ENCODE measurements at regions of chr14 and their contacts with region 1.

Region 1: DNA sequence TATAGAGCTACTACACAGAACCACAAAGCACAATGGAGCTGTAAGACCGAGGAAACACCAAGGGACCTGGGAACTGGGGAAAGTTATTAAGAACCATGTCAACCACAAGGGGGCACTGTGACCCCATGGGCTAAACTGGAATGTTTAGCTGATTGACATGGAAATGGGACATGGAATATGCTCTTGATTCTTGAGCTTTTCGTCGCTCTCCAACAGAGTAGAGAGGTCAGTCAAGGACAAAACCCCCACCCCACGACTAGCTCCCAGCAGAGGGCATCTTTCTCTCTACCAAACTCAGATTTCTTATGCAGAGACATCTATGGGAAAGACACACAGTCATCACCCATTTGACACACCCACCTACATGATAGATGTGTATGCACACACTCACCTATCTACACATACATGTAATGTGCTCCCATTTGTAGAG is 10.1 kb downstream of the NDRG2 start:
- DNase-seq: peak; percentile 59 to 88 (median 60)
- ATAC-seq: peak; percentile 95
- H3K4me3 ChIP-seq: no peak overlapping the region
- H3K27ac ChIP-seq: no peak overlapping the region
- H3K4me1 ChIP-seq: peaks cover 0 to 7% of the 10 kb centered on the region in 2 experiments; a peak in 1 of 5 replicates
- H3K27me3 ChIP-seq: no peaks in the 10 kb centered on the region
- CTCF ChIP-seq: peak; percentile 76 to 95 (median 93)
- EP300 ChIP-seq: no peak
- POLR2A ChIP-seq: no peak
- RAD21 ChIP-seq: peak; percentile 92 to 96

Region 2: DNA sequence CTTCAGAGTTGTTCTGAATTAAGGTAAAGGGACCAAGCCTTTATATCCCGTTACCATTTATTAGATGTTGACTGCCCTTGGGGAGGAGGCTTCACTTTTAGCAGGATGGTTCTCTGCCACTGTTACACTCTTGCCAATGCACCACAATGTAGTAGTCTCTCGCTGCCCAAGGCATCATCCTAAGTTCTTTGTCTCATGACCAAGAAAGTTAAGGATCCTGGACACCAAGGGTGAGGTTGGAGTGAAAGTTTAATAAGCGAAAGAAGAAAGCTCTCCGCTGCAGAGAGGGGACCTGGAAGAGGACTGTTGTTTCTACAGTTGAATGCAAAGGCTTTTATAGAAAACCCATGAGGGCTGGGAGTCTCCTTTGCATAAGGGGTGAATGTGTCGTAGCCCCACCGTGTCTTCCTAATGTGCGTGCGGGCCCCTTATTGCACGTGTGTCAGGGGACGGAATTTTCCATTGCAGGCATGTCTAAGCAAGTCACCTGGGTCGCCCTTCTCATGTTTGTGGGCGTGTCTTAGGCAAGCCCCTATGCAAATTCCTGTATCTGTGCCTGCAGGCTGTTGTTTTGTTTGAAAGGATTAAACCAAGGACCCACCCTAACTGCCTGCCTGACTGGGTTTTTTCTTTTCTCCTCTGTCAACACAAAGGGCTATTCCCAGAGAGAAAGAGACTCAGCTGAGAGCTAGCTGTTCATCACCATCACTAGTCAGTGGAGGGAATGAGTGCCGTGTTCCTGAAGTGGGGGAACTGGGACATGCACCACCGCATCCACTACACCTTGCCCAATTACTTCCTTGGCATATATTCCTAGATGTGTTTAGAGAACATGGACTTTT is 194.5 kb before region 1 on chr14:
- CTCF ChIA-PET with region 1: no interaction called
- POLR2A ChIA-PET with region 1: no interaction called
- in situ Hi-C with region 1: no loop called
- intact Hi-C with region 1: no loop called
- DNase-seq: peak; percentile 41 to 84 (median 58)
- ATAC-seq: peak; percentile 94
- H3K4me3 ChIP-seq: no peak overlapping the region
- H3K27ac ChIP-seq: peak overlapping the region; percentile 69
- H3K4me1 ChIP-seq: peaks cover 5 to 26% of the 10 kb centered on the region in 2 experiments; a peak in 4 of 5 replicates
- H3K27me3 ChIP-seq: no peaks in the 10 kb centered on the region
- CTCF ChIP-seq: no peak
- EP300 ChIP-seq: peak; percentile 89
- POLR2A ChIP-seq: peak; percentile 59
- RAD21 ChIP-seq: no peak

Region 3: DNA sequence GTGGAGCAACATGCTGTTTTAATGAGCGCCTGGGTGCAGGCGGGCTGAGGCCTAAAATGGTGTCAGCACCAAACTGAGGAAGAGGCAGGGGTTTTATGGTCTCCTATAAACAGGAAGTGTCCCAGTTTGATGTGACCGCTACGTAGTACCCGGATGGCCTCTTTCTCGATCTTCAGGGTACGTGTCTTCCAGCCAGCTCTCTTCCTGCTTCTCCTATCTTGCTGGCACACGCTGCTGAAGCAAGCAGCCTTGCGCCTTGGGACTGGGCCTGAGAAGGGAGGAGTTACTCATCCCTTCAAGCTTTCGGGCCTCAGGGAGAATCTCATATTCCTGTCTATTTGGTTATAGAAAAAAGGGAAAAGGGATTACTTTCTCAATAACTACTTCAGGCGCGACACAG is 183.9 kb before region 1 on chr14:
- CTCF ChIA-PET with region 1: no interaction called
- POLR2A ChIA-PET with region 1: no interaction called
- in situ Hi-C with region 1: no loop called
- intact Hi-C with region 1: no loop called
- DNase-seq: no peak
- ATAC-seq: no peak
- H3K4me3 ChIP-seq: no peak overlapping the region
- H3K27ac ChIP-seq: no peak overlapping the region
- H3K4me1 ChIP-seq: no peaks in the 10 kb centered on the region; a peak in 2 of 5 replicates
- H3K27me3 ChIP-seq: no peaks in the 10 kb centered on the region
- CTCF ChIP-seq: no peak
- EP300 ChIP-seq: no peak
- POLR2A ChIP-seq: no peak
- RAD21 ChIP-seq: no peak

Region 4: DNA sequence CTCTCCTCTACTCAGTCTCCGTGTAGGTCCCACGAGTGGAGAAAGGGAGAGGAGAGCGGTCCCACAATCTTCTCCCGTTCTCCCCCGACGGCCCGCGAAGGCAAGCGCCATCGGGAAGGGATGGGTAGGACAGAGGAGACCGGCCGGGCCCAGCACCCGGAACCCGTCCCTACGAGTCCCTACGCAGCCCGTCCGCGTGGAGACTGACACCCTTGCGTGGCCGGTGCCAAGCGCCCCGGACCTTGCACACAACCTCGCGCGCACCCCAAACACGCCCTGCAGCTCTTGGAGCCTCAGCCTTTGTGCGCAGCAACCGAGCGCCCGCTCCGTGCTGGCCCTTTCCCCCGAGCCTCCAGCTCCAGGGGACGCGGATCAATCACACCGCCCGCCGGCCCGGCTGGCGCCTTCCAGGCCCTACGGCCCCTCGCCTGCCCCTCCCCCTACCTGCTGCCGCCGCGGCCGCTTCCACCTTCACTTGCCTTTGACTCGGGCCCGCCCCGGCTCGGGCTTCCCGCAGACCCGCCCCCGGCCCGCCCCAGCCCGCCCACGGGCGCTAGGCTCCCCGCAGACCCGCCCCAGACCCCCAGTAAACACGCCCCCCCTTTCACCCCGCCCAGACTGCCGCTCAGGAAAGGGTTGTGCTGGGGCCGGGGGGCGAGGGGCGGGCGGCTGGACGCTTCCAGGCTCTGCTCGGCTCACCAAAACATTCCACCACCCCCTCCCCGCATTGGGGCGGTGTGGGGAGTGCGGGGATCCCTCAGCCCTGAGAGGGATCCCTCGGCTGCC is 10.0 kb after region 1 on chr14 and contains the start of gene NDRG2:
- CTCF ChIA-PET with region 1: no interaction called
- POLR2A ChIA-PET with region 1: interaction called, 12 read pairs
- in situ Hi-C with region 1: no loop called
- intact Hi-C with region 1: no loop called
- DNase-seq: peak; percentile 85 to 92 (median 91)
- ATAC-seq: peak; percentile 90
- H3K4me3 ChIP-seq: peak within 1 kb of the TSS; percentile 66
- H3K27ac ChIP-seq: peak within 1 kb of the TSS; percentile 80
- H3K4me1 ChIP-seq: peaks cover 35 to 39% of the 10 kb centered on the region in 2 experiments
- H3K27me3 ChIP-seq: no peaks in the 10 kb centered on the region
- CTCF ChIP-seq: no peak
- EP300 ChIP-seq: no peak
- POLR2A ChIP-seq: peak; percentile 65
- RAD21 ChIP-seq: no peak
- polyA plus RNA-seq, gene NDRG2: 10.1 to 22.9 TPM

Region 5: DNA sequence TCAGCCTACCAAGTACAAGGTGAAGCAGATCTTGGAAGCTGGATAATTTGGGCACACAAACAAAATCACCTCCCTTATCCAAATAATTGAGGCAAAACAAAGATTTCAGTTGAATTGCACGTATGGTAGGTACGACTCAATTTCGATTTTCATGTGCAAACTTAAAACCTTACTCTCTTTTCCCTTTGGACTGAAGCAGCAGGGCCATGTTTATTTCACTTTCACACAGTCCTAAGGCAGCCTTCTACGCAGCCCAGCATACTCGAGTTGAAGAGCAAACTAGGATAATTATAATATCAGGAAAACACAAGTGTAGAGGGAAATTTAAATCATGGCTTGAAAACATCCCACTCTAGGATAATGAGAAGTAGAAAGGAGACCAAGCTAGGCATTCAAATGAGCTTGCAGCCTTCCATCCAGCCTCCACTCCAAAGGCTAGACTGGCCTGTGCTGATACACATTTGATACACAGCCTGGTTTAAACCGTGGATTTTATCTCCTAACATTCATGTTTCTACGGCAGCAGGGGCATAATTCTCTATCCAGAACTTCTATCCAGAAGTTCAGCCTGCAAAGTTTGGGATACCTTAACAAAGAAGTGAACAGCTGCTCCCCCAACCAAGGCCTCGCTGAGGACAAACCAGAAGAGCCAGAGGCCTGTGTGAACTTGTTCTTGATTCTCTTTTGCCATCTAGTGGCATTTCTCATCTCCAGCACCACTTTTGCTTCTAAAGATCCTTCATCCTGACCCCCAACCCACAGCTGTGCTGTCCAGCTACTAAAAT is 25.0 kb after region 1 on chr14:
- CTCF ChIA-PET with region 1: interaction called, 33 read pairs
- POLR2A ChIA-PET with region 1: interaction called, 15 read pairs
- in situ Hi-C with region 1: no loop called
- intact Hi-C with region 1: loop called (anchors 1 kb)
- DNase-seq: peak in 2 of 4 experiments; percentile 64 to 73
- ATAC-seq: peak; percentile 92
- H3K4me3 ChIP-seq: no peak overlapping the region
- H3K27ac ChIP-seq: no peak overlapping the region
- H3K4me1 ChIP-seq: peaks cover 5 to 25% of the 10 kb centered on the region in 2 experiments; a peak in 4 of 5 replicates
- H3K27me3 ChIP-seq: no peaks in the 10 kb centered on the region
- CTCF ChIP-seq: peak; percentile 62 to 84 (median 75)
- EP300 ChIP-seq: no peak
- POLR2A ChIP-seq: no peak
- RAD21 ChIP-seq: peak; percentile 81 to 89

Region 6: DNA sequence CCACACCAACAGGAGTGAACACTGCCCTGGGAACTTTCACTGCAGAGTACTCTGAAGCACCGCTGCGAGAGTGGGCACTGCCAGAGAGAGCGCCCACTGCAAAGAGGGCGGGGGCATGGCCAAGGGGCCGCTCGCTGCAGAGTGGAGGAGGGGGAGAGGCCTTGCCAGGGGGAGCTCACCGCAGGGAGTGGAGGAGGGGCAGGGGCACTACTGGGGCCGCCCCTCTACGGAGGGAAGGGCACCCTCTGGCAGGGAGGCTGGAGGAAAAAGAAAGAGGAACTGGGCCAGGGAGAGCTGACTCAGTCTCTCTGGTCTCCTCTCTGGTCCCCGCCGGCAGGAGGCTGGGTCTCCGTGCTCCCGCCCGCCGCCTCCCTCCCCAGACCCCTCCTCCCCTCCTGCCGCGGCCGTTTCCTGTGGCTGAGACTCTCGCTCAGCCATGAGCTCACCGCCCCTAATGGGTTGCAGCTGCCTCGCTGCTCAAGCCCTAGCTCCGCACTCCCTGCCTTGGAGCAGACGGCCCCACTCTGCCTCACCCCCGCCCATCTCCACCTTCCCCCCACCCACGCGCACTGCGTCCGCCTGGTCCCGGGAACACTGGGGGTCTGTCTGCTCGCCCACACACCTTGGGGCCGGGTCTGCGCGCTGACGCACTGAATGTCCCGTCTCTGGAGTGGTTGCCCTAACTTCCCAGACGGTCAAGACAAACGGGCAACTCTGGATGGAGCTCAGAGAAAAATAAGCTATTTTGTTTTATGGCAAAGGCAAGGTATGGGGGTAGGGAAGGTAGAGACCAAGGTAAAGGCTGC is 56.7 kb after region 1 on chr14:
- CTCF ChIA-PET with region 1: interaction called, 3 read pairs
- POLR2A ChIA-PET with region 1: no interaction called
- in situ Hi-C with region 1: no loop called
- intact Hi-C with region 1: loop called (anchors 1 kb)
- DNase-seq: peak; percentile 58 to 76 (median 62)
- ATAC-seq: peak; percentile 72
- H3K4me3 ChIP-seq: 0 out of 2 replicates have a peak overlapping the region, but pooled peaks have one; percentile 13
- H3K27ac ChIP-seq: no peak overlapping the region; the same call in 2 of the 3 replicates
- H3K4me1 ChIP-seq: peaks cover 2 to 41% of the 10 kb centered on the region in 2 experiments; a peak in 3 of 5 replicates
- H3K27me3 ChIP-seq: no peaks in the 10 kb centered on the region
- CTCF ChIP-seq: no peak
- EP300 ChIP-seq: no peak
- POLR2A ChIP-seq: no peak
- RAD21 ChIP-seq: no peak

Region 7: GRCh38 chr14:21092273-21093011 is 77.7 kb after region 1 on chr14:
- CTCF ChIA-PET with region 1: interaction called, 21 read pairs
- POLR2A ChIA-PET with region 1: interaction called, 3 read pairs
- in situ Hi-C with region 1: no loop called
- intact Hi-C with region 1: loop called (anchors 2 kb)
- DNase-seq: peak; percentile 72 to 78 (median 74)
- ATAC-seq: peak; percentile 88
- H3K4me3 ChIP-seq: no peak overlapping the region
- H3K27ac ChIP-seq: no peak overlapping the region
- H3K4me1 ChIP-seq: peaks cover 4 to 29% of the 10 kb centered on the region in 2 experiments; a peak in 4 of 5 replicates
- H3K27me3 ChIP-seq: no peaks in the 10 kb centered on the region
- CTCF ChIP-seq: peak; percentile 98 to 100 (median 100)
- EP300 ChIP-seq: no peak
- POLR2A ChIP-seq: no peak
- RAD21 ChIP-seq: peak; percentile 92 to 98

Region 8: GRCh38 chr14:21191809-21192446 is 177.2 kb after region 1 on chr14:
- CTCF ChIA-PET with region 1: no interaction called
- POLR2A ChIA-PET with region 1: no interaction called
- in situ Hi-C with region 1: no loop called
- intact Hi-C with region 1: no loop called
- DNase-seq: peak; percentile 35 to 79 (median 48)
- ATAC-seq: peak; percentile 99
- H3K4me3 ChIP-seq: peak overlapping the region; percentile 21
- H3K27ac ChIP-seq: no peak overlapping the region
- H3K4me1 ChIP-seq: peaks cover 4 to 14% of the 10 kb centered on the region in 2 experiments; a peak in 3 of 5 replicates
- H3K27me3 ChIP-seq: no peaks in the 10 kb centered on the region
- CTCF ChIP-seq: no peak
- EP300 ChIP-seq: no peak
- POLR2A ChIP-seq: no peak
- RAD21 ChIP-seq: no peak

Measured in K562 (cell line).